CD4-positive, alpha-beta memory T cell (primary cell): ENCODE measurements at regions of chr5 and their contacts with region 1.

Region 1: DNA sequence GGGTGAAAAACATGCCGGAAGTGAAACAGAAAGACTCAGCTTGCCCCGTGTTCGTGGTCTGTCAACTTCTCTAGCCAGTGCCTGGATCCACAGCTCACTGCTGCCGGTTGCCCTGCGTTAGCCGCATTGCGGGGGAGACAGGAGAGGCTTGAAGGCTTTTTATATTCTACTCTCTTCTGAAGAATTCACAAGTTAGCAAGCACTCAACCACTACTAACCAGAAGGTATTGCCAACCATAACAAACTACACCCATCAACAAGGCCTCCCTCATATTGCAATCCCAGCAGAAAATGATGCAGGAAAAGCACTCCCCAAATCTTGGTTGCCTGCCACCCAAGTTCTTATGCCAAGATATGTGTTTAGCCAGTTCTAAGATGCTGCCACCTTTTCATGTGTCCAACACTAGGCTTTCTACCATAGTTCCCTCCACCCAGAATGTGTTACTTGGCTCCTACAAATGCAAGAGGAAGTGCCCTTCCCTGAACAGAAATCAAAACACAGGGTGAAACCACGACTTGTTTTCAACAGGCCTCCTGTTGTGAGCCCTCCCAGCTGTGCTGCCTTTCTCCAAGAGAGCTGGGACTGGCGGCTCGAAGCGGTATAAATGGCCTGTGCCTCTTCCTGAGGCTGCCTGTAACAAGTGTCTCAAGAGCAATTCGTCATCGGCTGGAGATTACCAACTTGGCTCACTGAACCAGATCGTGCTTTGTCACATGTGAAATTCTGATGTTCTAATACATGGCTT is 129.0 kb downstream of the SNX18 start:
- DNase-seq: peak; percentile 60 to 69 (median 61)
- H3K4me3 ChIP-seq: peak overlapping the region; percentile 31 to 50
- H3K4me3 Mint-ChIP-seq: peak overlapping the region; percentile 72 to 83 (median 76)
- H3K27ac ChIP-seq: peak overlapping the region; percentile 30
- H3K27ac Mint-ChIP-seq: peak overlapping the region; percentile 87 to 95 (median 91)
- H3K4me1 ChIP-seq: peaks cover 53% of the 10 kb centered on the region
- H3K4me1 Mint-ChIP-seq: peaks cover 38 to 64% (median 53%) of the 10 kb centered on the region in 4 donors
- H3K27me3 ChIP-seq: no peaks in the 10 kb centered on the region
- H3K27me3 Mint-ChIP-seq: no peaks in the 10 kb centered on the region

Region 2: GRCh38 chr5:54215233-54215736 is 431.2 kb before region 1 on chr5:
- CTCF ChIA-PET with region 1: no interaction called
- POLR2A ChIA-PET with region 1: no interaction called
- intact Hi-C with region 1: no loop called
- DNase-seq: no peak
- H3K4me3 ChIP-seq: no peak overlapping the region
- H3K4me3 Mint-ChIP-seq: no peak overlapping the region
- H3K27ac ChIP-seq: no peak overlapping the region
- H3K27ac Mint-ChIP-seq: no peak overlapping the region
- H3K4me1 ChIP-seq: no peaks in the 10 kb centered on the region
- H3K4me1 Mint-ChIP-seq: peaks cover 8 to 18% (median 15%) of the 10 kb centered on the region in 4 donors
- H3K27me3 ChIP-seq: no peaks in the 10 kb centered on the region
- H3K27me3 Mint-ChIP-seq: no peaks in the 10 kb centered on the region

Region 3: DNA sequence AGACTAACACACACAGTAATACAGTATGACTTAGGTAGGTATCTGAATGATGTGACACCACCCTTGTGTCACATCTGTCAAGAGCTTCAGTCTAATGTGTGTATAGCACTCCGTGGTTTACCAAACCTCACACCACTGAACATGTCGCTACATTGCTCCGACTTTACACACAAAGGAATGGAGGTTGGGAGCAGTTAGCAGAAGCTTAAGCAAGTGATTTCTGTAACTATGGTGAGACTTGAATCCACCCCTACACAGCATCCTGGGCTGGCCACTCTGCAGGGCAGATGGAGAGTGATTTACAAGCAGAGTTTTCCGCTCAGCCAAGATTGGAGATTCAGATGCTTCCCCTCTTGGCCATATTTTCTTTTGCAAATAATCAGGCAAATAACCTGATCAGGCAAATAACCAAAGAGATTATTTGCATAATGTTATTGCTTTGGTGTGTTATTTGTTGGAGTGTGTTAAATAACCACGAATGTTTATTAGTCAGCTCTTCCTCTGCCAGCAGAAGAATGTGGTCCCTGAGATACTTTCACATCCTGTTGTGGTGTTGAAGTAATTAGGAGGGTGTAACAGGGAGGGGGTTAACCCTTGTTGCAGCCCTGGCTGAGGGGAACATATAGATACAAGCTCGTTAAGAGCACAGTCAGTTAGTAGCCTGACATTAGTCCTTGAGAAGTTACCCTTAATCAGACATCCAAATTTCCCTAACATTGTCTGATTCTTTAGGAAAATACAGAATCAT is 36.2 kb before region 1 on chr5:
- CTCF ChIA-PET with region 1: interaction called, 3 read pairs
- POLR2A ChIA-PET with region 1: interaction called, 61 read pairs
- intact Hi-C with region 1: loop called (anchors 2 kb)
- DNase-seq: peak; percentile 43 to 60 (median 55)
- H3K4me3 ChIP-seq: peak overlapping the region; percentile 3 to 49
- H3K4me3 Mint-ChIP-seq: peak overlapping the region; percentile 54 to 86 (median 77)
- H3K27ac ChIP-seq: no peak overlapping the region
- H3K27ac Mint-ChIP-seq: peak overlapping the region; percentile 64 to 84 (median 68)
- H3K4me1 ChIP-seq: peaks cover 22% of the 10 kb centered on the region
- H3K4me1 Mint-ChIP-seq: peaks cover 23 to 25% (median 25%) of the 10 kb centered on the region in 4 donors
- H3K27me3 ChIP-seq: no peaks in the 10 kb centered on the region
- H3K27me3 Mint-ChIP-seq: no peaks in the 10 kb centered on the region

Region 4: DNA sequence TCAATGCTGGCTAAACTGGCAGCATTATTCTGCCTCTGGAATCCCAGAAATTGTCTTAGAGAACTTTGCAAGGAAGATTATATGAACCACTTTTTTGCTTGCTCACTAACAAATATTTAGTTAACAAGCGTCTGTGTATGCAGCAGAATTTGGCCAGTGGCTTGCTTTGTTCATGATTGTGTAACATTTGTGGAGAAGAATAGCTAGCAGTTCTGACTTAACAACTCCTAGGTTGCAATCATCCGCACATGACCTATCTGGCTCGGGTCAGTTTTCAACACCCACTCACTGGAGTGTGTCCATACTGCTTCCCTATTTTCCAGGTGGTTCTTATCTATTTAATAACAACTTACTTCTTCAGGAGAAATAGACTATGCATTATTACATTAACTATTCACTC is 30.5 kb before region 1 on chr5:
- CTCF ChIA-PET with region 1: interaction called, 3 read pairs
- POLR2A ChIA-PET with region 1: interaction called, 61 read pairs
- intact Hi-C with region 1: loop called (anchors 2 kb)
- DNase-seq: no peak
- H3K4me3 ChIP-seq: no peak overlapping the region
- H3K4me3 Mint-ChIP-seq: no peak overlapping the region
- H3K27ac ChIP-seq: no peak overlapping the region
- H3K27ac Mint-ChIP-seq: peak overlapping the region in 3 of 7 donors; percentile 2 to 24 (median 18)
- H3K4me1 ChIP-seq: peaks cover 5% of the 10 kb centered on the region
- H3K4me1 Mint-ChIP-seq: peaks cover 10 to 14% (median 10%) of the 10 kb centered on the region in 4 donors
- H3K27me3 ChIP-seq: no peaks in the 10 kb centered on the region
- H3K27me3 Mint-ChIP-seq: no peaks in the 10 kb centered on the region

Region 5: GRCh38 chr5:54630738-54631359 is 15.7 kb before region 1 on chr5:
- CTCF ChIA-PET with region 1: no interaction called
- POLR2A ChIA-PET with region 1: interaction called, 18 read pairs
- intact Hi-C with region 1: no loop called
- DNase-seq: no peak
- H3K4me3 ChIP-seq: no peak overlapping the region
- H3K4me3 Mint-ChIP-seq: no peak overlapping the region
- H3K27ac ChIP-seq: no peak overlapping the region
- H3K27ac Mint-ChIP-seq: no peak overlapping the region
- H3K4me1 ChIP-seq: no peaks in the 10 kb centered on the region
- H3K4me1 Mint-ChIP-seq: peaks cover 0 to 10% (median under 1%) of the 10 kb centered on the region in 4 donors
- H3K27me3 ChIP-seq: no peaks in the 10 kb centered on the region
- H3K27me3 Mint-ChIP-seq: no peaks in the 10 kb centered on the region

Region 6: DNA sequence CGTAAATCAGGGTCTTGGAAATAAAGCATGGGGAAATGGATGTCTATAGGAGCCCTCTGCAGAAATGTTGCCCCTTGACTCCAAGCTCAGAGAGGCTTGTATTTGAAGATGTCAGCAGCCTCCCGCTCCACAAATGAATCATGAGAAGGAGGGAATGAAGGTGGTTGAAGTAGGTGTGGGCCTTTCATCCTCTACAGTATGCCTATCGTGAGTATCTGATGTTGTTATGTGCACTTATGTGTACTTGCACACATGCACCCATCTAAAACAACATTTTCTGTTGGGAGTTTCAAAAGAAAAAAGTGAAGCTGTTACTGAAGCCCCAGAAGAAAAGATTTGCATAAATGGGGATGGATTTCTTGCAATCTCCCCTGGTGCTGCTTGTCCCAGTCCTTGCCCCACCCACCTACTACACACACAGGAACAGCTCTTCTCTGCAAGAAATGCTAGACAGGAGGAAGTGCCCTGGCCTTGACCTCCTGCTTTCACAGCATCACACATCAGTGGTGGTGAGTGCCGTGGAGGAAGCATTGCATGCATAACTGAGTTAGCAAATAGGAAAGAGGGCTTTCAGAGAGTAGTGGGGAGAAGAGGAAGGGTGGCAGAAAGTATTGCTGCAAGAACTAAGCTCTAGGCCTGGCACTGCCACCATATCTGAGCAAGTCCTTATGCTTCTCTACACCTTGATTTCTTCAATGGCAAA is 27.1 kb after region 1 on chr5:
- CTCF ChIA-PET with region 1: no interaction called
- POLR2A ChIA-PET with region 1: interaction called, 19 read pairs
- intact Hi-C with region 1: no loop called
- DNase-seq: peak; percentile 35 to 67 (median 40)
- H3K4me3 ChIP-seq: no peak overlapping the region
- H3K4me3 Mint-ChIP-seq: peak overlapping the region in 7 of 8 donors; percentile 3 to 70 (median 51)
- H3K27ac ChIP-seq: no peak overlapping the region
- H3K27ac Mint-ChIP-seq: peak overlapping the region; percentile 0 to 78 (median 24)
- H3K4me1 ChIP-seq: peaks cover 40% of the 10 kb centered on the region
- H3K4me1 Mint-ChIP-seq: peaks cover 39 to 66% (median 54%) of the 10 kb centered on the region in 4 donors
- H3K27me3 ChIP-seq: no peaks in the 10 kb centered on the region
- H3K27me3 Mint-ChIP-seq: no peaks in the 10 kb centered on the region

Region 7: DNA sequence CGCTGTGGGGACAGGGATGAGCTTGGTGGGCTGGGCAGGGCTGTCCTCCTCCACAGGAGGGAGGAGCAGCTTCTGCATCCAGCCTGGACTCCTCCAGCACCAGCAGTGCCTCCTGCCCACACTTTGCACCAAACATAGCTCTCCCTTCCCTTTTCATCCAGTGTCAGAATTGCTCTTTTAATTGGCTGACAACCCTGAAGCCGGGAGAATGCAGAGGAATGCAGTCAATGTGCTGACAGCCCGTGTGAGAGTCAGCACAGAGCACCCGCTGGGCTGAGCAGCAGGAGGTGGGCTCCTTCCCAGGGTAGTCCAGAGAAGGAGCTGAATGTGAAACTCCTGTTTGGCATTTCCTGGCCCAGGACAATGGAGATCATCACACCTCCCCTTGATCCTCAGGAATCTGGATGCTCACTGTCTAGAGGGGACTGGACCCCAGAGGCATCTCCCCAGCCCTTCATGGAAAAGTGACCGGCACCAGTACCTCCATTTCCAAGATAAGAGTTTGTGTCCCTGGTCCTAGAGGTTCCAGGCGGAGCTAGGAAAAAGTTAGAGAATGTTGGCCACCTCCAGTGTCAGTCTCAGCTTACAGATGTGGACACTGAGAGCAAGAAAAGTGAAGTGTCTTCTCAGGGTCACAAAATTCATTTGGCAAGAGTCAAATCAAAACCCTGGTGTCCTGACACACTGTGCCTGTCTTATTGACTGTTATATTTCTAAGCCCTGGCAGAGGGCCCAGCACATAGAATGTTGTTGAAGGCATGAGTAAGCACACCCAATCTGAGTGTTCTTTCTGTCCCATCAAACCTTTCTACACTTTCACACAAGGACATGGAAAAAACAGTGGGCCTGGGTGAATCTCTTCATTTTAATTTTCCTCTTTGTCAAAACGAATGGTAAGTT is 73.1 kb after region 1 on chr5:
- CTCF ChIA-PET with region 1: no interaction called
- POLR2A ChIA-PET with region 1: no interaction called
- intact Hi-C with region 1: no loop called
- DNase-seq: no peak
- H3K4me3 ChIP-seq: no peak overlapping the region
- H3K4me3 Mint-ChIP-seq: no peak overlapping the region
- H3K27ac ChIP-seq: no peak overlapping the region
- H3K27ac Mint-ChIP-seq: no peak overlapping the region
- H3K4me1 ChIP-seq: peaks cover 13% of the 10 kb centered on the region
- H3K4me1 Mint-ChIP-seq: peaks cover 12 to 26% (median 16%) of the 10 kb centered on the region in 4 donors
- H3K27me3 ChIP-seq: no peaks in the 10 kb centered on the region
- H3K27me3 Mint-ChIP-seq: peaks cover 0 to under 1% of the 10 kb centered on the region in 2 donors

Region 8: GRCh38 chr5:54758038-54758437 is 111.5 kb after region 1 on chr5:
- CTCF ChIA-PET with region 1: no interaction called
- POLR2A ChIA-PET with region 1: interaction called, 10 read pairs
- intact Hi-C with region 1: no loop called
- DNase-seq: no peak
- H3K4me3 ChIP-seq: no peak overlapping the region
- H3K4me3 Mint-ChIP-seq: no peak overlapping the region
- H3K27ac ChIP-seq: no peak overlapping the region
- H3K27ac Mint-ChIP-seq: no peak overlapping the region
- H3K4me1 ChIP-seq: peaks cover 20% of the 10 kb centered on the region
- H3K4me1 Mint-ChIP-seq: peaks cover 17 to 30% (median 24%) of the 10 kb centered on the region in 4 donors
- H3K27me3 ChIP-seq: no peaks in the 10 kb centered on the region
- H3K27me3 Mint-ChIP-seq: no peaks in the 10 kb centered on the region